ENCODE measurements at regions of chr15 and their contacts with region 1.

Region 1: GRCh38 chr15:56245871-56246814 is 2.5 kb upstream of the RFX7 start:
- DNase-seq: peak; percentile 88 to 95 (median 92)
- H3K4me3 ChIP-seq: peak overlapping the region in 2 of 4 donors; percentile 11 to 92
- H3K27ac ChIP-seq: peak overlapping the region in 4 of 5 donors; percentile 76 to 96 (median 85)
- H3K4me1 ChIP-seq: peaks cover 14 to 28% of the 10 kb centered on the region in 2 donors
- H3K27me3 ChIP-seq: no peaks in the 10 kb centered on the region
- CTCF ChIP-seq: peak; percentile 98 to 100 (median 99)
- POLR2A ChIP-seq: no peak

Region 2: GRCh38 chr15:56102441-56102840 is 143.7 kb before region 1 on chr15:
- intact Hi-C with region 1: loop called in 1 of 2 experiments (anchors 10 kb)
- DNase-seq: peak in 5 of 7 donors; percentile 31 to 70 (median 36)
- H3K4me3 ChIP-seq: no peak overlapping the region
- H3K27ac ChIP-seq: peak overlapping the region in 3 of 5 donors; percentile 2 to 73 (median 42)
- H3K4me1 ChIP-seq: peaks cover 11 to 19% of the 10 kb centered on the region in 2 donors
- H3K27me3 ChIP-seq: no peaks in the 10 kb centered on the region
- CTCF ChIP-seq: no peak
- POLR2A ChIP-seq: no peak

Region 3: DNA sequence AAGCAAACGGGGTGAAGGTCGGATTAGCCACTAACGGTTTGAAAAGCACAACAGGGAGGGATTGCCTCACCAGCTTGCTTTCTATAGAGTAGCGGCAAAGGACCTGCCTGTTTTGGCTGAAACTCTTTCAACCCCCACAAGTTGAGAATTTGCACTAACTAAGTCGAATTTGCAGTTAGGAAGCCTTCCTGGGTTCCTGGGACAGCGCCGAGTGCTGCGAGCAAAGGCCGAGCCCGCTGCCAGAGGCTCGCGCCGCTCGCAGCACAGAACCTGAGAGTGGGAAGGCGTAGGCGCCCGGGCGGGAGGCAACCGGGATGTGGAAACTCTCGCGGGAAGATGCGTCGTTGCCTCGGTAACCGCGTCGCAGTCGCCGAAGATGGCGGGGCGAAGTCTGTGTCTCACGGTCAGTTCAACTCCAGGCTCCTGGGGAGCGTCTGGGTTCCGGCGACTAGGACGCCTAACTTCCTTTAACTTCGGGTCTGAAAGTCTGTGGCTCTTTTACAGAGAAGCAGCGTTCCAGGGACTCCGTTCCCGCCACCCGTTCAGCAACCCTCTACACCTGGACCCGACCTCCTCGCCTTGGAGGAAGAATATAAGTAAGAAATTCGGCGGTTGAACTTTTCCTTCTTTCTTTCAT is 119.0 kb after region 1 on chr15 and contains the start of gene TEX9:
- intact Hi-C with region 1: loop called in 1 of 2 experiments (anchors 10 kb)
- DNase-seq: peak; percentile 89 to 94 (median 91)
- H3K4me3 ChIP-seq: peak within 1 kb of the TSS in 3 of 4 donors; percentile 13 to 77 (median 56)
- H3K27ac ChIP-seq: peak within 1 kb of the TSS; percentile 18 to 87 (median 75)
- H3K4me1 ChIP-seq: peaks cover 5 to 6% of the 10 kb centered on the region in 2 donors
- H3K27me3 ChIP-seq: no peaks in the 10 kb centered on the region
- CTCF ChIP-seq: no peak
- POLR2A ChIP-seq: peak; percentile 55 to 84
- total RNA-seq, gene TEX9: 5.8 to 18.3 (median 8.9) TPM

Region 4: GRCh38 chr15:56428821-56429458 is 182.8 kb after region 1 on chr15:
- intact Hi-C with region 1: loop called (anchors 5 to 10 kb)
- DNase-seq: no peak
- H3K4me3 ChIP-seq: no peak overlapping the region
- H3K27ac ChIP-seq: no peak overlapping the region
- H3K4me1 ChIP-seq: no peaks in the 10 kb centered on the region
- H3K27me3 ChIP-seq: no peaks in the 10 kb centered on the region
- CTCF ChIP-seq: peak; percentile 37 to 71 (median 58)
- POLR2A ChIP-seq: no peak

Measured in adrenal gland (tissue), 19 donors.